OCI-LY7 (cell line): ENCODE measurements at regions of chr15 and their contacts with region 1.

Region 1: GRCh38 chr15:92979011-92979701 is 79.0 kb downstream of the CHD2 start:
- DNase-seq: no peak
- H3K4me3 ChIP-seq: no peak overlapping the region
- H3K27ac ChIP-seq: no peak overlapping the region
- H3K4me1 ChIP-seq: no peaks in the 10 kb centered on the region
- CTCF ChIP-seq: no peak

Region 2: GRCh38 chr15:92938387-92938786 is 40.8 kb before region 1 on chr15:
- CTCF ChIA-PET with region 1: no interaction called
- POLR2A ChIA-PET with region 1: interaction called, 4 read pairs
- intact Hi-C with region 1: loop called (anchors 5 kb)
- DNase-seq: no peak
- H3K4me3 ChIP-seq: no peak overlapping the region
- H3K27ac ChIP-seq: no peak overlapping the region
- H3K4me1 ChIP-seq: no peaks in the 10 kb centered on the region
- CTCF ChIP-seq: peak; percentile 54

Region 3: DNA sequence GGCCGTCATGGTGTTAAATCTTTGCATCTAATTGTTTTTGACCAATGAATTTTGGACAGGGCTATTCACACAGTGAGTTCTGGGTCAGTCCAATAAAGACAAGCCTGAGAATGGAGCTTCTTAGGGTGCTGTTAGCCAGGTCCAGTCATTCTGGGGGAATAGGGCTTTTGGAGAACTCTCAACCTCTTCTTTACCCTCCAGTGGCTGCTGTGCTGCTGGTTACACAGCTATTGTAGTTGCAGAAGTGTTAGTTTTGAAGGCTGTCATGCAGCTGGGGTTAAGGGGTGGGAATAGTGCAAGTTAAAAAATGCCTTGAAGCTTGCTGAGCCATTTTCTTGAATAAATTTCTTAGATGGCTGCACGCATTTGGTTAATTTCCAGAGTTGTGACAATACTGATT is 10.9 kb after region 1 on chr15:
- CTCF ChIA-PET with region 1: no interaction called
- POLR2A ChIA-PET with region 1: interaction called, 3 read pairs
- intact Hi-C with region 1: loop called (anchors 2 kb)
- DNase-seq: no peak
- H3K4me3 ChIP-seq: no peak overlapping the region
- H3K27ac ChIP-seq: no peak overlapping the region
- H3K4me1 ChIP-seq: no peaks in the 10 kb centered on the region
- CTCF ChIP-seq: no peak

Region 4: DNA sequence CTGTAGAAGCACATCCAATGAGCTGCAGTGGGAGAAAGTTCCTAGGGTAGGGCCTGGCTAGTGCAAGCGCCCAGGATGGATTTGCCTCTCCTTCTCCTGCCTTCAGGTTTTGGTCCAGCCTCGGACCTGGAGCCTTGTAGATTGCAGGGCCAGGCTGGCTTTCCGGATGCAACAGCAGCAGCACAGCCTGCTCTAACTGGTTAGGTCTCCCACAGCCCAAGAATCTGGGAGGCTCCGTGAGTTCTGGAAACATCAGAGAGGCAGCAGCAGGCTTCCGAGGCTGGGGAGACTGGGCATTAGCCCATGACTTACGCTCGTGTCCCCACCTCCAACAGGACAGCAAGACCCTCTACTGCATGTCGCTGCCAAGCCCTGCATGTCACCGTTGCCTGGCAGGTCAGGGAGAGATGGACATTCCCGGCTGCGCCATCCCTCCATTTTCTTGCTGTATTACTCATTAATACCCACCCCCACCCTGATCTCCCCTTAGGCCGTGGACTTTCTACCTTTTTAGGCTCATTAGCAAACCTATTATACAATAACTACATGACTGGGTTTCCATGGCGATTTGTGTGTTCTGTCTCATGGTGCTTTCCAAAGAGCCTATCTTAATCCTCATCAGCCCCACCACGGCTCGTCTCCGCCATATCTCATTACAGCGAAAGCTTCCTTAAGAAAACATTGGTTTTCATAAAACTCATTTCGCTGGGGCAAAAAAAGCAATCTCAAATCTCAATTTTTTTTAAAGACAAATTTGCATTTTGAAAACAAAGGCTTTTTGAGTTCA is 150.7 kb after region 1 on chr15:
- CTCF ChIA-PET with region 1: no interaction called
- POLR2A ChIA-PET with region 1: no interaction called
- intact Hi-C with region 1: no loop called
- DNase-seq: no peak
- H3K4me3 ChIP-seq: no peak overlapping the region
- H3K27ac ChIP-seq: no peak overlapping the region
- H3K4me1 ChIP-seq: no peaks in the 10 kb centered on the region
- CTCF ChIP-seq: no peak

Region 5: DNA sequence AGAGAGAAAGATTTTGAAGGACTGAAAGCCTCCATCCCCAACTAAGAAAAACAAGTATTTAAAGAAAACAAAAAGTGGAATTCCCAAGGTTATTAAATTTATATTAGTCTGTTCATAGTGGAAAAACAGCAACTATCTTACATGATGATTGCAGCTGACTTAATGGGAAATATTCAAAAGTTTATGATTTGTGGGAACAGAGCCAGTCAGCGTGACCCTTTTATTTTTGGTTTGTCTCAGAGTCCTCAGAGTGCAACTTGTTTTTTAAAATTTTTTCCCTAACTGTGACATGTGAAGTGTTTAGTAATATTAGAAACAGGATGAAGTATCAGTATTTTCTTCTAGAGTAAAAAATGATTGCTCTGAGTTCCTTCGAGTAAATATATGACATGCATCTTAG is 810.3 kb after region 1 on chr15:
- CTCF ChIA-PET with region 1: no interaction called
- POLR2A ChIA-PET with region 1: no interaction called
- intact Hi-C with region 1: no loop called
- DNase-seq: no peak
- H3K4me3 ChIP-seq: no peak overlapping the region
- H3K27ac ChIP-seq: no peak overlapping the region
- H3K4me1 ChIP-seq: no peaks in the 10 kb centered on the region
- CTCF ChIP-seq: no peak